ENCODE measurements at regions of chr4 and their contacts with region 1.

Region 1: DNA sequence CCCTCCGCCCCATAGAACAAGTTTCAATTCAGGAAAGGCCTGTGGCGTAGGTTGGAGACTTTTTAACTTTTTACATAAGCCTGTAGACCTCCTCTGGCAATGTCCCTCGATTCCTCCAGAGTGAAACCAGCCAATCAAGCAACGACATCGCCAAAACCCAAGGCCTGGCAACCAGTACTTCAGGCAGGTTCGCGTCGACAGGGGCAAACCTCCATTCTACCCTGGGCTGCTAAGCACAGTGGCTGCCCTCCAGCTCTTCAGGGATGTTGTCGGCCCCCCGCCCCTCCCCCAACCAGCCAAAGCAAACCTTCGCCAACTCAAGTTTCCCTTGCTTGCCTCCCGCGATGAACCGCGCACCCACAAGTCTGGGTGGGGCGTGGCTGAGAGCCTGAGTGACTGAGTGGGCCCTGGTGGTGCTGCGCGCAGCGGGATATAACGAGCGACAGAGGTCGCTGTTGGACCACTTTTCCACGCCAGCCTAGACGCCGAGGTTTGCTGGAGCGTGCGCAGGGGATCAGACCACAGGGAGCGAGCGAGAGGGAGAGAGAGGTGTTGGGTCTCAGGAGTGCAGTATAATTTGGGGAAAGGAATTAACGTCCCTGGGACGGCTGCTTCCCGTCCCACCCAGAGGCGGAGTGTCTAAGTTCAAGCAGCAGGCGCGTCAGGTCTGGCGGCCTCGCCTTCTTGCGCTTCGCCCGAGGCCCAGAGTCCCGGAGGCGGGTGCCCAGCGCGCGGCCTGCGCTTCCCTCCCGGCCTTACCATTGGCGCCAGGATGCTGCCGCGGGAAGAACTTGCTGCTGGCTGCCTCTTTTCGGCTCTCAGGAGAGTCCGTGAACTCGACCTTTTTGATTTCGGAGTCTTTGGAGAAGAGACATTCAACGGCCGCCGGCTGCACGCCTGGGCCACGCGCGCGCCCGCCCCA is 9.0 kb upstream of the PITX2 start:
- DNase-seq: no peak
- ATAC-seq: no peak
- H3K4me3 Mint-ChIP-seq: peak overlapping the region; percentile 61
- H3K27ac Mint-ChIP-seq: no peak overlapping the region
- H3K4me1 Mint-ChIP-seq: peaks cover 14% of the 10 kb centered on the region
- H3K27me3 Mint-ChIP-seq: peaks cover 74% of the 10 kb centered on the region
- CTCF ChIP-seq: no peak

Region 2: GRCh38 chr4:110617646-110618580 is 13.9 kb before region 1 on chr4:
- CTCF ChIA-PET with region 1: no interaction called
- POLR2A ChIA-PET with region 1: no interaction called
- intact Hi-C with region 1: loop called (anchors 2 kb)
- DNase-seq: no peak
- ATAC-seq: no peak
- H3K4me3 Mint-ChIP-seq: no peak overlapping the region
- H3K27ac Mint-ChIP-seq: no peak overlapping the region
- H3K4me1 Mint-ChIP-seq: peaks cover 18% of the 10 kb centered on the region
- H3K27me3 Mint-ChIP-seq: peaks cover 78% of the 10 kb centered on the region
- CTCF ChIP-seq: no peak

Region 3: DNA sequence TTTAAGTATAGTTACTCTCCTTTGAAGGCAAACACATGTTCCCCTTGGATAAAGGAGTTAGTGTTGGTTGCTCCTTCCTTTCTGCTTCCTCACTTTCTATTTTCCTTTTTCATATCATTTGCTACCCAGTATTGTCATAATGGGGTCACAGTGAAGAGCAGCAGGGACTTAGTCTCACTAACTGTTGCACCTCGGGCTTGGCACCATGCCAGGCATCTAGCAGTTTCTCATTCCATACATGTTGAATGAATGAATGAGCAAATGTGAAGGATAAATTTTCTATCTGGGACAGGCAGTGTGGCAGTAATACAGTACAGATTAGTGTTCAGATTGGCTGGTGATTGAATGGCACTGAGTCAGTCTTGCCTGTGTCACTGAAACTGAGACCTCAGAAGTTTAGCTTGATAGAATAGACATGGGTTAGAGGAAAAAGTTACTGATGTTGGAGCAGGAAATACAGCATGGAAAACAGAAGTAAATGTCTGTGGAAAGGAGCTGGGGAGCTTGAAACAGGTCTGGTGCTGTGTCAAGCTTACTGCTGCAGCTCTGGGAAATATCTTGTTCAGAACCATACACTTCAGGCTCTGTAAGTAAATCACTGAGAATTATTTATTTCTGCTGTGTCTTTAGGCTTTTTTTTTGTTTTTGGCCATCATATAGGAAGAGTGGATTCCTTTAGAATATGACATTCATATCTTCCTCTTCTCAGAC is 46.8 kb after region 1 on chr4:
- CTCF ChIA-PET with region 1: no interaction called
- POLR2A ChIA-PET with region 1: no interaction called
- intact Hi-C with region 1: no loop called
- DNase-seq: no peak
- ATAC-seq: no peak
- H3K4me3 Mint-ChIP-seq: no peak overlapping the region
- H3K27ac Mint-ChIP-seq: no peak overlapping the region
- H3K4me1 Mint-ChIP-seq: no peaks in the 10 kb centered on the region
- H3K27me3 Mint-ChIP-seq: peaks cover 5% of the 10 kb centered on the region
- CTCF ChIP-seq: no peak

Region 4: DNA sequence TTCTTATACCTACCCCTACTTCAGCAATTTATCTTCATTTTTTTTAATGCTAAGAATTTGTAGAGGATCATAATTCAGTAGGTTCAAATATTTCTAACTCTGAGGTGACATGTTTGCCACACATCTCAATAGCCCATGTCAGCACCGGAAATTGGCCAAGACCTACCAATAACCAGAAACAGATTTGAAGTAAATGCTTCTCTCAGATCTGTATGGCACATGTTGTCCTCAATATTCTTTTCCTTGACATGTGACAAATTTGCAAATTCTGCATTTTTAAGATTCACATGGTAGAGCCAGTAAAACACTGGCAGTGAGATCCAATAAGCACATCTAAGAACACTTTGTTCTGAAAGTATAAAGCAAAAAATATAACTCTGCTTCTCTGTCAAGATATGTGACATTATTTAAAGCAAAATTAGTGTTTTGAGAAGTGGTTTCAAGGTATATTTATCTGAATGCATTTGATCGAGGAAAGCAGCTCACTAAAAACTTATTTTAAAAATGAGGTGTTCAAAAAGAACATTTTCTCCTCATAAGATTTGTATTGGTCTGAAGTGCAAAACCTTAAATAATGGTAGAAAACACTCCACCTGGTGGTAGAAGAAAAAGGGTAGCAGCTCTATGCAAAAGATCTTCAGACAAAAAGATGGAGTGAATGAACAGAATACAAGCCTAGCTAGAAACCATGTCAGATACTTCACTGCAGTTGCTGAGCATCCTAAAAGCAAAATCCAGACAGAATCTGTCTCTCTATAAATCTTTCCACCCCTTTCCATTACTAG is 999.6 kb after region 1 on chr4:
- CTCF ChIA-PET with region 1: no interaction called
- POLR2A ChIA-PET with region 1: no interaction called
- intact Hi-C with region 1: loop called (anchors 10 kb)
- DNase-seq: no peak
- ATAC-seq: no peak
- H3K4me3 Mint-ChIP-seq: no peak overlapping the region
- H3K27ac Mint-ChIP-seq: no peak overlapping the region
- H3K4me1 Mint-ChIP-seq: no peaks in the 10 kb centered on the region
- H3K27me3 Mint-ChIP-seq: peaks cover 2% of the 10 kb centered on the region
- CTCF ChIP-seq: no peak

Region 5: DNA sequence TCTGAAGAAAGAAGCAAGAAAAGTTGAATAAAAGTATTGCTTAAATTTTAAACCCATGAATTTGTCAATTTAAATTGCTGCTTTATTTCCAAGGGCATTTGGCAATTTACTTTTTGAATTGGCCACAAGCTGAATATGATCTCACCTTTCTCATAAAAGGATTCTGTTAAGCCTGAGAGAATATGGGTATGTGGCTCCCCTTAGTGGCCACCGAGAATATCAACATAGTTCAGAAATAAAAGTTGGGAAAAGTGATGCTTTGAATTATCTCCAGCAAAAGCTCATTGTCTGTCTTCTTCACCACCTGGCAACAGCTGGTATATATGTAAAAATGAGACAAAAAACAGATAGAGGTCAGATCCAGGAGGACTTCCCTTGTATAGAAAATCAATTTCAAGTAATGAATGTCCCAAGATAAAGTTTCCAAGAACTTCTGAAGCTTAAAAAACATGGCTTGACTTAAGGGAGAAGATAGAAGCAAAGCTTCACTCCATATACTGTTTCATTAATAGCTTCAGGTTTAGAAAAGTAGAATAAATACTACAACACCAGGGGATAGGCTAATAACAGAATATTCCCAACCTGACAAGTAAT is 1222.7 kb after region 1 on chr4:
- CTCF ChIA-PET with region 1: no interaction called
- POLR2A ChIA-PET with region 1: no interaction called
- intact Hi-C with region 1: loop called (anchors 10 kb)
- DNase-seq: no peak
- ATAC-seq: no peak
- H3K4me3 Mint-ChIP-seq: no peak overlapping the region
- H3K27ac Mint-ChIP-seq: no peak overlapping the region
- H3K4me1 Mint-ChIP-seq: no peaks in the 10 kb centered on the region
- H3K27me3 Mint-ChIP-seq: no peaks in the 10 kb centered on the region
- CTCF ChIP-seq: no peak

Region 6: GRCh38 chr4:111930659-111931058 is 1298.8 kb after region 1 on chr4:
- CTCF ChIA-PET with region 1: no interaction called
- POLR2A ChIA-PET with region 1: no interaction called
- intact Hi-C with region 1: loop called (anchors 5 kb)
- DNase-seq: no peak
- ATAC-seq: peak; percentile 76
- H3K4me3 Mint-ChIP-seq: no peak overlapping the region
- H3K27ac Mint-ChIP-seq: no peak overlapping the region
- H3K4me1 Mint-ChIP-seq: peaks cover 14% of the 10 kb centered on the region
- H3K27me3 Mint-ChIP-seq: peaks cover 2% of the 10 kb centered on the region
- CTCF ChIP-seq: no peak

Region 7: DNA sequence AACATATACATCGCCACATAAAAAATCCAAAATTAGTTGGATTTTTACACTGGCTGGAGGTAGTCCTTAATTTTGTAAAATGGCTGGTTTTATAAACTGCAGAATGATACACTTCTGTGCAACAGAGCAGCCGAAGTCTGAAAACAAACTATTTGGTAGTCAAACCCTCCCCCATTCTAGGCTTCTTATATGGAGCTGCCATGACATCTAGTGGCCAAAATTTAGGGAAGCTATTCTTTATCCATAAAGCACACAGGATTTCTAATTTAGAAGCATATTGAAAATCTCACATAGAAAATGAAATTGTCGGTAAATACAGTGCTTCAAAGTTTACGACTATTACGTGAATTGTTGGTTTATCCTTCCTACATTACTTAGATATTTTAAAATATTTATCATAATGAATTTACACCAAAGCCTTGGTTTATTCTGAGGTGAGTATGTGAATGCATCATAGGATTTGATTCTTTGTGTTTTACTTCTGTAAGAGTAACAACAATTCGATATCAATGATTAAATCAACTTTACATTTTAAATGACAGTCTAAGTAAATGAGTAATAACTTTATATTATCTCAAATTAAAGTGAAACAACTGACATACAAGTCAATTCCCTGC is 1400.0 kb after region 1 on chr4:
- CTCF ChIA-PET with region 1: no interaction called
- POLR2A ChIA-PET with region 1: no interaction called
- intact Hi-C with region 1: loop called (anchors 5 kb)
- DNase-seq: no peak
- ATAC-seq: no peak
- H3K4me3 Mint-ChIP-seq: no peak overlapping the region
- H3K27ac Mint-ChIP-seq: no peak overlapping the region
- H3K4me1 Mint-ChIP-seq: no peaks in the 10 kb centered on the region
- H3K27me3 Mint-ChIP-seq: peaks cover 16% of the 10 kb centered on the region
- CTCF ChIP-seq: no peak

Region 8: DNA sequence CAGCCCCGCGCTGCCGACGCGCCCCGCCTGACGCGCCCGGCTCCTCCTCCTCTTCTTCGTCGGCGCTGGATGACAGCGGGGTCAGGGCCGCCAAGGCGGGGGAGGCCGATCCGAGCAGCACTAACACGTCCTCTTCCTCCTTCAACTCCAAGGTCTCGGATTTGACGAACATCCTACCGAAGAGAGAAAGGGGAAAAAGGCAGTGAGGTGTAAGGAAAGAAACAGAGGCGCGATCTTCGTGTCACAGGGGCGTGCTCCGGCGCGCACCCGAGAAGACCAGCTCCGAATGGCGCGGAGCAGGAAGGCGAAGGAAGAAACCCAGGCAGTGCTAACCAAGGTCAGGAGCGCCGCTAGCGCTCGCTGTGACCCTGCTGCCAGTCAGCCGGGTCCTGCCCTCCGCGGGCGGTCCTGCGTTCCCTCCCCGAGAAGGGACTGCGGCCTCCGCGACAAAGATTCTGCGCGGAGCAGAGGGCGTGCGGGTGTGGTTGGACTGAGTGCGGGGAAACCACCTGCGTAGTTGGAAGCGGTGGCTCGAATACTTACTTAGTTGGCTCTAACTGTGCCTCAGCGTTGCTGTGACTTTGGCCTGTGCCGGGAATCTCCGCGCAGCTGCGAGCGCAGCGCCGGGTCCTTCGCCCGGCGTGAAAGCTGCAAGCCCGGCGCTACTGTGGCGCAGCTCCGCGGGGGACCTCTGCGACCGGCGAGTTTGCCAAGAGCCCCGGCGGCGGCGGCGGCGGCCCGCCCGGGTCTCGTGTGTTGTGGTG is 1883.6 kb after region 1 on chr4:
- CTCF ChIA-PET with region 1: no interaction called
- POLR2A ChIA-PET with region 1: no interaction called
- intact Hi-C with region 1: loop called (anchors 5 kb)
- DNase-seq: no peak
- ATAC-seq: peak; percentile 46
- H3K4me3 Mint-ChIP-seq: peak overlapping the region; percentile 92
- H3K27ac Mint-ChIP-seq: peak overlapping the region; percentile 62
- H3K4me1 Mint-ChIP-seq: peaks cover 49% of the 10 kb centered on the region
- H3K27me3 Mint-ChIP-seq: peaks cover 79% of the 10 kb centered on the region
- CTCF ChIP-seq: no peak